GM12878 (cell line): ENCODE measurements at regions of chr5 and their contacts with region 1.

Region 1: GRCh38 chr5:149960272-149961185 is at the start of gene SLC26A2:
- DNase-seq: peak; percentile 93
- ATAC-seq: peak; percentile 98
- H3K4me3 ChIP-seq: peak within 1 kb of the TSS; percentile 67
- H3K27ac ChIP-seq: peak within 1 kb of the TSS; percentile 70
- H3K4me1 ChIP-seq: peaks cover 12% of the 10 kb centered on the region
- H3K27me3 ChIP-seq: no peaks in the 10 kb centered on the region; a peak in 1 of 4 replicates
- CTCF ChIP-seq: no peak
- EP300 ChIP-seq: no peak; a peak in 1 of 4 replicates
- POLR2A ChIP-seq: peak; percentile 94
- RAD21 ChIP-seq: no peak
- polyA plus RNA-seq, gene SLC26A2: 1.7 to 1.9 TPM

Region 2: GRCh38 chr5:149636851-149637246 is 323.7 kb before region 1 on chr5:
- CTCF ChIA-PET with region 1: interaction called, 22 read pairs
- POLR2A ChIA-PET with region 1: no interaction called
- RAD21 ChIA-PET with region 1: interaction called, 7 read pairs
- SMC1A ChIA-PET with region 1: interaction called, 6 read pairs
- in situ Hi-C with region 1: no loop called
- intact Hi-C with region 1: no loop called
- DNase-seq: no peak
- ATAC-seq: peak; percentile 85
- H3K4me3 ChIP-seq: no peak overlapping the region
- H3K27ac ChIP-seq: no peak overlapping the region
- H3K4me1 ChIP-seq: peaks cover 12% of the 10 kb centered on the region
- H3K27me3 ChIP-seq: no peaks in the 10 kb centered on the region
- CTCF ChIP-seq: peak; percentile 74 to 78 (median 77)
- EP300 ChIP-seq: no peak
- POLR2A ChIP-seq: no peak
- RAD21 ChIP-seq: peak; percentile 87

Region 3: GRCh38 chr5:149731639-149732323 is 228.7 kb before region 1 on chr5:
- CTCF ChIA-PET with region 1: interaction called, 3 read pairs
- POLR2A ChIA-PET with region 1: no interaction called
- RAD21 ChIA-PET with region 1: no interaction called
- SMC1A ChIA-PET with region 1: no interaction called
- in situ Hi-C with region 1: no loop called
- intact Hi-C with region 1: loop called (anchors 10 kb)
- DNase-seq: peak; percentile 62
- ATAC-seq: peak; percentile 77
- H3K4me3 ChIP-seq: peak overlapping the region; percentile 100
- H3K27ac ChIP-seq: peak overlapping the region; percentile 82
- H3K4me1 ChIP-seq: no peaks in the 10 kb centered on the region; the same call in 1 of the 2 replicates
- H3K27me3 ChIP-seq: no peaks in the 10 kb centered on the region
- CTCF ChIP-seq: no peak
- EP300 ChIP-seq: no peak
- POLR2A ChIP-seq: peak; percentile 77
- RAD21 ChIP-seq: no peak

Region 4: GRCh38 chr5:150000256-150000989 is 39.9 kb after region 1 on chr5 and contains the starts of genes HMGXB3 and TIGD6:
- CTCF ChIA-PET with region 1: interaction called, 8 read pairs
- POLR2A ChIA-PET with region 1: interaction called, 6 read pairs
- RAD21 ChIA-PET with region 1: no interaction called
- SMC1A ChIA-PET with region 1: interaction called, 4 read pairs
- in situ Hi-C with region 1: no loop called
- intact Hi-C with region 1: loop called (anchors 2 kb)
- DNase-seq: peak; percentile 88
- ATAC-seq: peak; percentile 94
- H3K4me3 ChIP-seq: peak within 1 kb of the TSS; percentile 98
- H3K27ac ChIP-seq: peak within 1 kb of the TSS; percentile 92
- H3K4me1 ChIP-seq: 0 out of 2 replicates have a peak, but pooled peaks cover 3% of the 10 kb centered on the region
- H3K27me3 ChIP-seq: no peaks in the 10 kb centered on the region
- CTCF ChIP-seq: no peak
- EP300 ChIP-seq: no peak
- POLR2A ChIP-seq: peak; percentile 97
- RAD21 ChIP-seq: no peak
- polyA plus RNA-seq, gene HMGXB3: 1.00 to 1.8 TPM
- polyA plus RNA-seq, gene TIGD6: 0.84 to 1.1 TPM